ENCODE measurements at regions of chr19 and their contacts with region 1.

Region 1: DNA sequence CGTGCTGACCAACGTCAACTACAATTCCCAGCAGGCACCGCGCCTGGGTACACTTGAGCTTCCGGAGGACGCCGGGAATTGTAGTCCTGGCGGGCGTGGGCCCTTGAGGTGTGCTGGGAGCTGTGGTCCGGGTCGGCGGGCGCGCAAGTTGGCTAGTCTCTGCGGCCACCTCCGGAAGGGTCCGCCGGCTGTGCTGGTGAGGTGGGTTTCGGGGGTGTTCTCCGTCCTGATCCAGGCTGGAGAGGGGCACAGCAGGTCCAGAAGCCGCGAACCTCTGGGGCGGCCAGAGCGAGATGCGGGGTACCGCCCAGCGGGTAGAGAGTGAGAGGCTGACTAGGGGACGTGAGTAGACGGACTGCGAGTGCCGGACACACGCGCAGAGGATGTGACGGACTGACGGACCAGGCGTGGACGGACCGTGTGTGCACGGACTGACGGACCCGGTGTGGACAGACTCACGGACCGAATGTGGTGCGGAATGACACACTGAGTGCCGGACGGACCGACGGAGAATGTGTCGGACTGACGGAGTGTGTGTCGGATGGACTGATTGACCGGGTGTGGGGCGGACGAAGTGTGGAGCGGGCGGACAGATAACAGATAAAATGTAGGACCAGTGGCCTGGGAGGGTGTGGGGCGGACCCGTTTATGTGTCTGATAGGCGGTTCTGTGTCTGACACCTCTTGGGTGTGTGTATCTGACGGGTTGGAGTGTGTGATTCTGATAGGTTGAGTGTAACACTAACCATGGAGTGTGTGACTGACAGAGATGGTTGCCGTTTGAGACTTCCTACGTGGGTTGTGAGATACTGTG is at the start of gene ZSCAN22:
- DNase-seq: peak; percentile 93
- ATAC-seq: peak; percentile 95
- H3K4me3 ChIP-seq: peak within 1 kb of the TSS; percentile 83 to 95 (median 89)
- H3K27ac ChIP-seq: peak within 1 kb of the TSS; percentile 78
- H3K4me1 ChIP-seq: peaks cover 41% of the 10 kb centered on the region
- H3K27me3 ChIP-seq: no peaks in the 10 kb centered on the region; a peak in 1 of 5 replicates
- CTCF ChIP-seq: peak; percentile 9; the same call in 1 of the 2 replicates
- EP300 ChIP-seq: peak in 1 of 2 experiments; percentile 40; a peak in 1 of 4 replicates
- POLR2A ChIP-seq: peak; percentile 59 to 75
- RAD21 ChIP-seq: peak; percentile 54; the same call in 1 of the 2 replicates
- total RNA-seq, gene ZSCAN22: 2.5 and 3.1 TPM in 2 replicates

Region 2: GRCh38 chr19:58033741-58034471 is 293.2 kb before region 1 on chr19 and contains the start of gene ZSCAN1:
- CTCF ChIA-PET with region 1: no interaction called
- POLR2A ChIA-PET with region 1: no interaction called
- in situ Hi-C with region 1: no loop called
- intact Hi-C with region 1: no loop called
- DNase-seq: no peak
- ATAC-seq: no peak
- H3K4me3 ChIP-seq: no peak within 1 kb of the TSS
- H3K27ac ChIP-seq: no peak within 1 kb of the TSS
- H3K4me1 ChIP-seq: peaks cover 7% of the 10 kb centered on the region; the same call in 1 of the 2 replicates
- H3K27me3 ChIP-seq: no peaks in the 10 kb centered on the region
- CTCF ChIP-seq: no peak
- EP300 ChIP-seq: no peak
- POLR2A ChIP-seq: no peak
- RAD21 ChIP-seq: no peak
- total RNA-seq, gene ZSCAN1: not detected in 2 replicates

Region 3: GRCh38 chr19:58372311-58373133 is 45.4 kb after region 1 on chr19:
- CTCF ChIA-PET with region 1: interaction called, 11 read pairs
- POLR2A ChIA-PET with region 1: no interaction called
- in situ Hi-C with region 1: no loop called
- intact Hi-C with region 1: loop called (anchors 2 kb)
- DNase-seq: no peak
- ATAC-seq: peak; percentile 54
- H3K4me3 ChIP-seq: no peak overlapping the region
- H3K27ac ChIP-seq: no peak overlapping the region
- H3K4me1 ChIP-seq: peaks cover 9% of the 10 kb centered on the region
- H3K27me3 ChIP-seq: no peaks in the 10 kb centered on the region
- CTCF ChIP-seq: peak; percentile 49
- EP300 ChIP-seq: no peak
- POLR2A ChIP-seq: no peak
- RAD21 ChIP-seq: 0 out of 2 replicates have a peak, but pooled peaks have one; percentile 25

Region 4: GRCh38 chr19:58408152-58409009 is 81.3 kb after region 1 on chr19 and contains the start of gene ZNF584:
- CTCF ChIA-PET with region 1: no interaction called
- POLR2A ChIA-PET with region 1: interaction called, 6 read pairs
- in situ Hi-C with region 1: no loop called
- intact Hi-C with region 1: loop called (anchors 5 kb)
- DNase-seq: peak; percentile 89
- ATAC-seq: peak; percentile 90
- H3K4me3 ChIP-seq: peak within 1 kb of the TSS; percentile 89 to 98 (median 95)
- H3K27ac ChIP-seq: peak within 1 kb of the TSS; percentile 85
- H3K4me1 ChIP-seq: peaks cover 32% of the 10 kb centered on the region
- H3K27me3 ChIP-seq: no peaks in the 10 kb centered on the region; a peak in 1 of 5 replicates
- CTCF ChIP-seq: peak; percentile 47
- EP300 ChIP-seq: no peak
- POLR2A ChIP-seq: peak; percentile 89 to 96
- RAD21 ChIP-seq: peak; percentile 36; the same call in 1 of the 2 replicates
- total RNA-seq, gene ZNF584: 6.8 and 7.0 TPM in 2 replicates

Region 5: GRCh38 chr19:58466760-58467589 is 139.9 kb after region 1 on chr19 and contains the start of gene ZNF324:
- CTCF ChIA-PET with region 1: no interaction called
- POLR2A ChIA-PET with region 1: no interaction called
- in situ Hi-C with region 1: no loop called
- intact Hi-C with region 1: loop called (anchors 5 kb)
- DNase-seq: peak; percentile 94
- ATAC-seq: peak; percentile 89
- H3K4me3 ChIP-seq: peak within 1 kb of the TSS; percentile 71 to 93 (median 86)
- H3K27ac ChIP-seq: peak within 1 kb of the TSS; percentile 51
- H3K4me1 ChIP-seq: peaks cover 24% of the 10 kb centered on the region
- H3K27me3 ChIP-seq: no peaks in the 10 kb centered on the region
- CTCF ChIP-seq: peak; percentile 62
- EP300 ChIP-seq: no peak
- POLR2A ChIP-seq: peak; percentile 64 to 74
- RAD21 ChIP-seq: no peak
- total RNA-seq, gene ZNF324: 4.0 and 4.7 TPM in 2 replicates

Measured in HepG2 (cell line).